MCF 10A (cell line): ENCODE measurements at regions of chr1 and their contacts with region 1.

Region 1: GRCh38 chr1:214584805-214585766 is 17.9 kb upstream of the CENPF start:
- DNase-seq: peak; percentile 85
- H3K4me3 Mint-ChIP-seq: no peak overlapping the region
- H3K27ac Mint-ChIP-seq: peak overlapping the region; percentile 49
- H3K4me1 Mint-ChIP-seq: peaks cover 38% of the 10 kb centered on the region
- H3K27me3 Mint-ChIP-seq: no peaks in the 10 kb centered on the region
- CTCF ChIP-seq: peak; percentile 98

Region 2: DNA sequence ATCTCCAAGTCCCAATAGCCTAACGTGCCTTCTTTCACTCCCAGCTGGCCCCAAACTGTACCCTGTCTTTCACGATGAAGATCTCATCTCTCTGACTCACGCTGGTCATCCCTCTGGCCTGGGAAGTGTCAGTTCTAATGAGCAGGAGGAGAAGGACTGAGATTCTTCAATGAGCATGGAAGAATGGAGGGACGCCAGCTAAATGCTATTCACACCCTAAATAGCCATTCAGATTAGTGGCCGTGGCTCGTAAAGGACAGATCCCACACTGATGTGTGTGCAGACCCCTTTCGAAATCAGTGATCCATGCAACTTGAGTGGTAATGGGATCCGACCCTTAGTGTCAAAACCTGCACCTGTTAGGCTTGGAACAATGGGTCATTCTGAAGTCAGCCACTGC is 380.0 kb before region 1 on chr1:
- CTCF ChIA-PET with region 1: no interaction called
- POLR2A ChIA-PET with region 1: no interaction called
- intact Hi-C with region 1: no loop called
- DNase-seq: no peak
- H3K4me3 Mint-ChIP-seq: no peak overlapping the region
- H3K27ac Mint-ChIP-seq: no peak overlapping the region
- H3K4me1 Mint-ChIP-seq: no peaks in the 10 kb centered on the region
- H3K27me3 Mint-ChIP-seq: peaks cover 2% of the 10 kb centered on the region
- CTCF ChIP-seq: no peak

Region 3: DNA sequence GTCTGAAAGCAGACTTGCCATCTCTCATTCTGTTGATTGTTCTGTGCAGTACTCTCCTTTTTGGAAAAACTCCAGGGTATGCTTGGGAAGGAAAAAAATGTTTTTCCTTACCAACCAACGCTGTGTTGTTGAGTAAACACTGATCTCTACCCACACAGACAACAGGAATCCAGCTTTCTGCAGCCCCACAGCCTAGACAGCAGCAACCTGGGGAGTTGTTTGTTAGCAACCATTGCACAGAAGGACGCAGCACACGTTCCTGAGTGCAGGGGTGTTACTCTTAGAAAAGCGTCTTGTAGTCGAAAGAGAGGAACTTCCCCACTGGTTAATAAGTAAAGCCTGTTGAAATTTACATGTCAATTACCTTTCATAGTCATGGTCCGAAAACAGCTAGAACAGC is 247.6 kb before region 1 on chr1:
- CTCF ChIA-PET with region 1: interaction called, 958 read pairs
- POLR2A ChIA-PET with region 1: interaction called, 53 read pairs
- intact Hi-C with region 1: loop called (anchors 1 kb)
- DNase-seq: no peak
- H3K4me3 Mint-ChIP-seq: no peak overlapping the region
- H3K27ac Mint-ChIP-seq: no peak overlapping the region
- H3K4me1 Mint-ChIP-seq: no peaks in the 10 kb centered on the region
- H3K27me3 Mint-ChIP-seq: no peaks in the 10 kb centered on the region
- CTCF ChIP-seq: no peak

Region 4: GRCh38 chr1:214386747-214387146 is 198.3 kb before region 1 on chr1:
- CTCF ChIA-PET with region 1: interaction called, 112 read pairs
- POLR2A ChIA-PET with region 1: interaction called, 24 read pairs
- intact Hi-C with region 1: loop called (anchors 1 kb)
- DNase-seq: peak; percentile 83
- H3K4me3 Mint-ChIP-seq: no peak overlapping the region
- H3K27ac Mint-ChIP-seq: peak overlapping the region; percentile 76
- H3K4me1 Mint-ChIP-seq: peaks cover 14% of the 10 kb centered on the region
- H3K27me3 Mint-ChIP-seq: no peaks in the 10 kb centered on the region
- CTCF ChIP-seq: no peak

Region 5: DNA sequence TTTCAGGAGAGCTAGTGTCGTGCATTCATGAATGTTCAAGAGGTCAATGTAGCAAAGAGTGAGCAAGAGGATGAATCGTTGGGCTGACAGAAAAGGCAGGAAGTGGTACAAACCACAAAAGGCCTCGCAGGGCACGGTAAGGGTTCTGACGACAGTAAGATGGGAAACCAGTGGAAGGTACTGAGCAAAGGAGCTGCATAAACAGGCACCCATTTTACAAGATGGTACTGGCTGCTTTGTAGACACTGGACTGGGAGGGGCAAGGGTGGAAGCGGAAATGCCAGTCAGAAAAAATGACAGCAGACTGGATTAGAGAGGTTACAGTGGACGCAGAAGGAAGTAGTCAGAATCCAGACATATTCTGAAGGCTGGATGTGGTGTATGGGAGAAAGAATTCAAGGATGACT is 157.2 kb before region 1 on chr1:
- CTCF ChIA-PET with region 1: interaction called, 16 read pairs
- POLR2A ChIA-PET with region 1: interaction called, 42 read pairs
- intact Hi-C with region 1: no loop called
- DNase-seq: peak; percentile 97
- H3K4me3 Mint-ChIP-seq: peak overlapping the region; percentile 15
- H3K27ac Mint-ChIP-seq: peak overlapping the region; percentile 82
- H3K4me1 Mint-ChIP-seq: peaks cover 63% of the 10 kb centered on the region
- H3K27me3 Mint-ChIP-seq: no peaks in the 10 kb centered on the region
- CTCF ChIP-seq: no peak

Region 6: DNA sequence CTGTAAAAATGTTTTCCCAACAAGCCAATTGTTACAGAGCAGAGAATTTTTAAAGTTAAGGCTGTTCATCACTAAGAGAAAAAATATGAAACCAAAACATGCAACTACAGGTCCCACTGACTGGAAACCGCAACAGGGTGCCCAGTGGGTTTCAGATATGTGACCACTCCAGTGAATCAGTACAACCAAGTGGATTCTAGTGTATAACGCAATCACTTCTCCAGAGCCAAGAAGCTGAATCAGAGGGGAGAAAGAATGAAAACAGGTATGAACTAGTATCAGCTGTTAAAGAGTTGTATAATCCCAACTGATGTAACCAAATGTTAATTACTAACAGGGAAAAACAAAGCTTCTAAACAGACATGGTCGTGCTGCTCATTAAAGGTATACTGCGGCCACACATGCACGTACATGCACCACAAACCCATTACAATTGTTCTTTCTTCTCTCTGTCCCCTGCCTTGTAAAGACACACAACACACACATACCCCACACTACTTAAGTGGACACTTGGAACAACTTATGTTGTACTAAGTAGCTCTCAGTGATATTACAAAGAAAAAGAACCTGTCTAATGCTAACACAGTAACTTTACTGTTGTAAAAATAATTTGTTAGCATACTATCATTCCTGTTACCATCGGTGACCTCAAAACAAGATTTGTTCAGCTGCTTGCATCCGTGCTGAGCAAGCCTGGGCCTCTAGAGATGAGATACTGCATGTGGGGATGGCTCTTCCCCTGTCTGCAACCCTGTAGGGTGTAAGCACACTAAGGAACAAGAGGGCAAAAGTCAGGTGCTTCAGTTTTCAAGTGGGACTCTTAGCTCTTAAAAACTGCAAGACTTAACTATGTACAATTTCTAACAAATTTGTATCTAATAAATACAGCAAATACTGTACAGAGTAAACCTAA is 107.9 kb before region 1 on chr1:
- CTCF ChIA-PET with region 1: interaction called, 120 read pairs
- POLR2A ChIA-PET with region 1: interaction called, 318 read pairs
- intact Hi-C with region 1: no loop called
- DNase-seq: peak; percentile 100
- H3K4me3 Mint-ChIP-seq: peak overlapping the region; percentile 65
- H3K27ac Mint-ChIP-seq: peak overlapping the region; percentile 88
- H3K4me1 Mint-ChIP-seq: peaks cover 68% of the 10 kb centered on the region
- H3K27me3 Mint-ChIP-seq: no peaks in the 10 kb centered on the region
- CTCF ChIP-seq: no peak

Region 7: DNA sequence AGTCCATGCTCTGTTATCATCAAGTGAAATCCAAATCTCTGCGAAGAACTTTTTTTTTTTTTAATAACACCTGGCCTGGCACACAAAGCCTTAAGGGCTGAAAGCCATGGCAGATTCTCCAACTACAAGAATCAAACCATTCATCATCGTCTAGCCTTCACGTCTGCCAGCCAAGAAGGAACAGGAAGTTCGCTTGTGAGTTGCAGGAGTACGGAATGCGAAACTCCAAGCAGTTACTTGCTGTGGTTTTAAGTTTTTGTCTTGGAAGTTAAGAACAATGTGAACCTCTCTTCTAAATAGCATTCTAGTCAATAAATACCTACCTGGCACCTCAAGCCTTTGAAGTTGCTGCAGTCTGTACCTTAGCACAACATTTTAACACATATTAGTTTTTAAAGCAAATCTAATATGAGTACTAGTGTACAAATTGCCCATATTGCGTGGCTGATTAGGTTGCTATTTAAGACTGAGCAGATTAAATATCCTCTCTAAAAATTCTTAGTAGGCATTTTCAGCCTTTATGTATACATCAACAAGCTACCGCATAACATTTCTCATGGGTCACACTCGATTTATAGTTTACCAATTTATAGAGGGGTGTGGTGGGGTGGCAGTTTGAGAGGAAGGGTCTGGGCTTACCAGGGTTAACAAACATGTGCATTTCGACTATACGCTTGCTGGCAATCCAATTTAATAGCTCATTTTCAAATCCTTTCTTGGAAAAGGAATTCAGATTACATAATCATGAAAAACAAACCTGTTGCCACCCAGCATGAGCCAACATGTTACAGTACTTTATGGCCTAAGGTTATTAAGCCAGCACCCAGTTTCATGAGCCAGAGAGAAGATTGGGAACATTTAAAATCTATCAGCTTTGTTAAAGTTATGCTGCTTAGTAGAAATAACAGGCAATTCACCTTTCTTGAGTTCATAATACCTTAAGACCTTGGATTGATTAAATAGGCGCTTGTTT is 11.4 kb before region 1 on chr1:
- CTCF ChIA-PET with region 1: interaction called, 93 read pairs
- POLR2A ChIA-PET with region 1: interaction called, 2,189 read pairs
- intact Hi-C with region 1: no loop called
- DNase-seq: peak; percentile 97
- H3K4me3 Mint-ChIP-seq: peak overlapping the region; percentile 59
- H3K27ac Mint-ChIP-seq: peak overlapping the region; percentile 95
- H3K4me1 Mint-ChIP-seq: peaks cover 65% of the 10 kb centered on the region
- H3K27me3 Mint-ChIP-seq: no peaks in the 10 kb centered on the region
- CTCF ChIP-seq: no peak

Region 8: DNA sequence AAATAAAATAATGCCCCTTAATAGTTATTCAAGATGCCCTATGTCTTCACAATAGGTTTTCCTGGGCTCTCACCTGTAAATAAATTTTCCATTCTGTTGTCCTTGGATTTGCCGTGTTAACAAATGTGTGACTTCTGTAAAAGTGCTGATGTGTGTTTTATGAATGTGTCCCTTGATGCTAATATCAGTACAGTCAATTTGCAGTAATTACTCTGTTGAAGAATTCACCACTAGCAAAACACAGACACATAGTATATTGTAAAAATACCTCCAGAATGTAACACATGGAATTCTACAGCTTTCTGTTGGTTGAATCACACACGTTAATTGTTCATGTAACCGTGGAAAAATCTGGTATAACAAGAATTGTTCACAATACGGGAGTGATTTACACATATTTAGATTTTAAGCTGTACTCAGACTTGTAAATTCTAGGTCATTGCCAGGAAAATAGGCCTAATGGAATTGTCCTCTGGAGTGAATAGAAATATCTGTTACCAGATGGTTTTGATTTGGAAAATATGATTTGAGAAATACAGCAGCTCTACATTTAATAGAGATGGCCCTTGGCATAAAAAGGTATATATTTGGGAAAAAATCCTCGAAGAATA is 460.7 kb after region 1 on chr1:
- CTCF ChIA-PET with region 1: no interaction called
- POLR2A ChIA-PET with region 1: no interaction called
- intact Hi-C with region 1: no loop called
- DNase-seq: no peak
- H3K4me3 Mint-ChIP-seq: no peak overlapping the region
- H3K27ac Mint-ChIP-seq: no peak overlapping the region
- H3K4me1 Mint-ChIP-seq: no peaks in the 10 kb centered on the region
- H3K27me3 Mint-ChIP-seq: no peaks in the 10 kb centered on the region
- CTCF ChIP-seq: no peak